CD8-positive, alpha-beta T cell (primary cell): ENCODE measurements at regions of chr6 and their contacts with region 1.

Region 1: GRCh38 chr6:15245361-15246216 is at the start of gene JARID2:
- DNase-seq: peak; percentile 89 to 97 (median 94)
- ATAC-seq: peak; percentile 41
- H3K4me3 ChIP-seq: peak within 1 kb of the TSS; percentile 92 to 99
- H3K4me3 Mint-ChIP-seq: peak within 1 kb of the TSS; percentile 97
- H3K27ac ChIP-seq: peak within 1 kb of the TSS; percentile 83 to 89
- H3K27ac Mint-ChIP-seq: peak within 1 kb of the TSS; percentile 96
- H3K4me1 ChIP-seq: peaks cover 19% of the 10 kb centered on the region
- H3K4me1 Mint-ChIP-seq: peaks cover 28% of the 10 kb centered on the region
- H3K27me3 ChIP-seq: no peaks in the 10 kb centered on the region
- H3K27me3 Mint-ChIP-seq: no peaks in the 10 kb centered on the region
- CTCF ChIP-seq: no peak
- total RNA-seq, gene JARID2: 30.6 to 31.2 TPM

Region 2: GRCh38 chr6:13711733-13712598 is 1533.6 kb before region 1 on chr6 and contains the start of gene RANBP9:
- CTCF ChIA-PET with region 1: no interaction called
- POLR2A ChIA-PET with region 1: no interaction called
- intact Hi-C with region 1: loop called in 1 of 2 experiments (anchors 10 kb)
- DNase-seq: peak; percentile 76 to 94 (median 86)
- ATAC-seq: peak; percentile 82
- H3K4me3 ChIP-seq: peak within 1 kb of the TSS; percentile 77 to 81
- H3K4me3 Mint-ChIP-seq: peak within 1 kb of the TSS; percentile 93
- H3K27ac ChIP-seq: peak within 1 kb of the TSS; percentile 77 to 83
- H3K27ac Mint-ChIP-seq: peak within 1 kb of the TSS; percentile 97
- H3K4me1 ChIP-seq: peaks cover 22% of the 10 kb centered on the region
- H3K4me1 Mint-ChIP-seq: peaks cover 43% of the 10 kb centered on the region
- H3K27me3 ChIP-seq: no peaks in the 10 kb centered on the region
- H3K27me3 Mint-ChIP-seq: no peaks in the 10 kb centered on the region
- CTCF ChIP-seq: no peak
- total RNA-seq, gene RANBP9: 79.1 to 81.9 TPM

Region 3: GRCh38 chr6:14210663-14211561 is 1034.7 kb before region 1 on chr6:
- CTCF ChIA-PET with region 1: no interaction called
- POLR2A ChIA-PET with region 1: no interaction called
- intact Hi-C with region 1: loop called in 1 of 2 experiments (anchors 2 kb)
- DNase-seq: peak; percentile 79 to 95 (median 85)
- ATAC-seq: peak; percentile 89
- H3K4me3 ChIP-seq: peak overlapping the region; percentile 52 to 78
- H3K4me3 Mint-ChIP-seq: peak overlapping the region; percentile 89
- H3K27ac ChIP-seq: peak overlapping the region; percentile 11 to 64
- H3K27ac Mint-ChIP-seq: peak overlapping the region; percentile 74
- H3K4me1 ChIP-seq: peaks cover 16% of the 10 kb centered on the region
- H3K4me1 Mint-ChIP-seq: peaks cover 14% of the 10 kb centered on the region
- H3K27me3 ChIP-seq: no peaks in the 10 kb centered on the region
- H3K27me3 Mint-ChIP-seq: no peaks in the 10 kb centered on the region
- CTCF ChIP-seq: peak; percentile 76

Region 4: GRCh38 chr6:14381829-14382677 is 863.5 kb before region 1 on chr6:
- CTCF ChIA-PET with region 1: no interaction called
- POLR2A ChIA-PET with region 1: no interaction called
- intact Hi-C with region 1: no loop called
- DNase-seq: peak in 1 of 9 experiments; percentile 12
- ATAC-seq: no peak
- H3K4me3 ChIP-seq: no peak overlapping the region
- H3K4me3 Mint-ChIP-seq: no peak overlapping the region
- H3K27ac ChIP-seq: no peak overlapping the region
- H3K27ac Mint-ChIP-seq: no peak overlapping the region
- H3K4me1 ChIP-seq: no peaks in the 10 kb centered on the region
- H3K4me1 Mint-ChIP-seq: peaks cover 21% of the 10 kb centered on the region
- H3K27me3 ChIP-seq: peaks cover 0 to 2% of the 10 kb centered on the region in 2 experiments
- H3K27me3 Mint-ChIP-seq: no peaks in the 10 kb centered on the region
- CTCF ChIP-seq: no peak

Region 5: DNA sequence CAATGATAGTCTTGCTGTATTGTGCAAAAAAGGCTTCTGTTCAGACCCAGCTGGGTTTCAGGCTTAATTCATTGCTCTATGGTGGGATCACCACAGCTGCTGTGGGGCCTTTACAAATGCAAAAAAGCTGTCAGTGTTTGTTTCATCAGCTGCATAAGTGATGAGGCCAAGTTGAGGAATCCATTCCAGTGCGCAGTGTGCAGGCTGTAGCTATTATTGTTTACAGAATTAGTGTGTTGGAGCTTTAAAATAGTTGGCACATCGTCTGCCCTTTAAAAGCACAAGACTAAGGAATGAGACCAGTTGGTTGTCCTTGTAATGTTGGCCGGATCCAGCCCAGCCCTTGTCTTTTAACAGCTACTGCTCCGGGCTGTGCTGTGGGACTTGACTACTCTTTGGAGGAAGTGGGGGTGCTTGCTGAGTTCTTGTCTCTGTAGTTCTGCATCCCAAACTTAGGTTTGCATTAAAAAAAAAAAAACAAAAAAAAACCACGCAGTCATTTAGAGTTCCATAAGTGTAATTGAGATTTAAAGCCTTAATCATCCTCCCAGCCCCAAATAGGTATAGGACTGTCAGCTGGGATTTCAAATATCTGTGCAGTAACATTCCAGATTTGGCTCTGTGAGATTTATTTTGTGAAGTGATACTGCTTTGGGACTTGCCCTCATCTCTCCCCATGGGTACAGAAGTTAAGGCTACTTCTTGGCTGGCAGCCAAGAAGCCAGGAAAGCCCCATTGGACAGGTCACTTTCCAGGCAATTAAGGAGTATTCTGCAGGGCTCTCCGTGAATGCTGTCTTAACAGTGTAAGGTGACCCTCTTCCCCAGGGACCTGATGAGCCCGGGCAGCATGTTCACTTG is 19.5 kb after region 1 on chr6:
- CTCF ChIA-PET with region 1: interaction called, 6 read pairs
- POLR2A ChIA-PET with region 1: interaction called, 9 read pairs
- intact Hi-C with region 1: loop called (anchors 2 kb)
- DNase-seq: no peak
- ATAC-seq: peak; percentile 25
- H3K4me3 ChIP-seq: peak overlapping the region in 1 of 2 experiments; percentile 17
- H3K4me3 Mint-ChIP-seq: peak overlapping the region; percentile 70
- H3K27ac ChIP-seq: no peak overlapping the region
- H3K27ac Mint-ChIP-seq: no peak overlapping the region
- H3K4me1 ChIP-seq: peaks cover 80% of the 10 kb centered on the region
- H3K4me1 Mint-ChIP-seq: peaks cover 90% of the 10 kb centered on the region
- H3K27me3 ChIP-seq: no peaks in the 10 kb centered on the region
- H3K27me3 Mint-ChIP-seq: no peaks in the 10 kb centered on the region
- CTCF ChIP-seq: no peak

Region 6: DNA sequence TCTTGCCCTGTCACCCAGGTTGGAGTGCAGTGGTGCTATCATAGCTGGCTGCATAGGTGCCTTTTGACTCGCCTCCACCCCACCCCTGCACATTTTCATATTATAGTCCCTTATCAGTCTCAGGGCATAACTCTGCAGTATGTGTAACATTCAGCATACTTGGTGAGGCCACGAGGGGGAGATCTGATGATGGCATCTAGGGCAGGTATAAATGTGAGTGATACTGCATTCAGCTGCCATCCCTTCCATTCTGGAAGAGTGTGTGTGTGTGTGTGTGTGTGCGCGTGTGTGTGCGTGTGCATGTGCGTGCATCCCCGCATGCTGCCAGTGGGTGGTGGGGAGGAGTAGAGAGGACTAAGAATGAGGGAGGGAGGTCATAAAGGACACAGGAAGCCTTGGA is 81.7 kb after region 1 on chr6:
- CTCF ChIA-PET with region 1: no interaction called
- POLR2A ChIA-PET with region 1: interaction called, 3 read pairs
- intact Hi-C with region 1: loop called in 1 of 2 experiments (anchors 2 kb)
- DNase-seq: peak in 6 of 9 experiments; percentile 18 to 70 (median 48)
- ATAC-seq: peak; percentile 77
- H3K4me3 ChIP-seq: no peak overlapping the region
- H3K4me3 Mint-ChIP-seq: no peak overlapping the region
- H3K27ac ChIP-seq: no peak overlapping the region
- H3K27ac Mint-ChIP-seq: no peak overlapping the region
- H3K4me1 ChIP-seq: peaks cover 66% of the 10 kb centered on the region
- H3K4me1 Mint-ChIP-seq: peaks cover 85% of the 10 kb centered on the region
- H3K27me3 ChIP-seq: no peaks in the 10 kb centered on the region
- H3K27me3 Mint-ChIP-seq: no peaks in the 10 kb centered on the region
- CTCF ChIP-seq: peak; percentile 41

Region 7: GRCh38 chr6:15491255-15491985 is 245.8 kb after region 1 on chr6:
- CTCF ChIA-PET with region 1: no interaction called
- POLR2A ChIA-PET with region 1: no interaction called
- intact Hi-C with region 1: loop called in 1 of 2 experiments (anchors 1 kb)
- DNase-seq: peak; percentile 49 to 80 (median 68)
- ATAC-seq: peak; percentile 89
- H3K4me3 ChIP-seq: no peak overlapping the region
- H3K4me3 Mint-ChIP-seq: no peak overlapping the region
- H3K27ac ChIP-seq: no peak overlapping the region
- H3K27ac Mint-ChIP-seq: peak overlapping the region; percentile 2
- H3K4me1 ChIP-seq: peaks cover 12% of the 10 kb centered on the region
- H3K4me1 Mint-ChIP-seq: peaks cover 40% of the 10 kb centered on the region
- H3K27me3 ChIP-seq: no peaks in the 10 kb centered on the region
- H3K27me3 Mint-ChIP-seq: no peaks in the 10 kb centered on the region
- CTCF ChIP-seq: peak; percentile 92

Region 8: DNA sequence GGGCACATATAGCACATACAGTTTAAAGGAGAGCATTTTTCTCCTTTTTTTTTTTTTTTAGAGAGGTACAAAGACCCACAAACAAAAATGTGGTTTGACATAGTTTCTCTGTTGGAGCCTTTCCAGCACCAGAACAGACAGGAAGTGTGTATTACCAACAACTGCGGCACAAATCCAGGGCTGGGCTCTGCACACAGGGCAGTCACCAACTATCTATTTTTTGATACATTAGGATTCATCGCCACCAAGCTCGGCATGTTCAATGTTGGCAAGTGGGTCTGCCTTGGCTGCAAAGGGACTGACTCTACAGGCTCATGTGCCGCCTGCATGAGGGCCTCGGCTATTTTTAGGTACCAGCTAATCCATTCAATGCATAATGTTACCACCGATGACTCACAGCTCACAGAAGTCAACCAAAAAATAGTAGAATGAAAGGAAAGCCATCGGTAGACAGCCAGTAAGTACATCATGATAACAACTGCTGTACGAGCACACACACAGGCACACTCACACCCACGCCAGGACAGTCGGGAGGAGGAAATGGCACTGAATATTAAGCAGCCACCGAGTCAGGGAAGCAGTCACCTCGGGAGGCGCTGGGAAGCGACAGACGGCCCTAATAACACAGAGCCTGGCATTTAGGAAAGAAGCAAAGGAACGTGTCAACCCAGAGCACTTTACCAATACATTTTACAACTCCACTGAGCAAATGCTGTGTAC is 1074.4 kb after region 1 on chr6:
- CTCF ChIA-PET with region 1: no interaction called
- POLR2A ChIA-PET with region 1: no interaction called
- intact Hi-C with region 1: loop called in 1 of 2 experiments (anchors 5 kb)
- DNase-seq: peak; percentile 27 to 90 (median 68)
- ATAC-seq: peak; percentile 58
- H3K4me3 ChIP-seq: peak overlapping the region; percentile 17 to 33
- H3K4me3 Mint-ChIP-seq: peak overlapping the region; percentile 67
- H3K27ac ChIP-seq: peak overlapping the region; percentile 69 to 85
- H3K27ac Mint-ChIP-seq: peak overlapping the region; percentile 94
- H3K4me1 ChIP-seq: peaks cover 73% of the 10 kb centered on the region
- H3K4me1 Mint-ChIP-seq: peaks cover 75% of the 10 kb centered on the region
- H3K27me3 ChIP-seq: no peaks in the 10 kb centered on the region
- H3K27me3 Mint-ChIP-seq: no peaks in the 10 kb centered on the region
- CTCF ChIP-seq: no peak